Activated CD4-positive, alpha-beta T cell treated with anti-CD3 and anti-CD28 coated beads for 36 hours (primary cell): ENCODE measurements at regions of chr10 and their contacts with region 1.

Region 1: DNA sequence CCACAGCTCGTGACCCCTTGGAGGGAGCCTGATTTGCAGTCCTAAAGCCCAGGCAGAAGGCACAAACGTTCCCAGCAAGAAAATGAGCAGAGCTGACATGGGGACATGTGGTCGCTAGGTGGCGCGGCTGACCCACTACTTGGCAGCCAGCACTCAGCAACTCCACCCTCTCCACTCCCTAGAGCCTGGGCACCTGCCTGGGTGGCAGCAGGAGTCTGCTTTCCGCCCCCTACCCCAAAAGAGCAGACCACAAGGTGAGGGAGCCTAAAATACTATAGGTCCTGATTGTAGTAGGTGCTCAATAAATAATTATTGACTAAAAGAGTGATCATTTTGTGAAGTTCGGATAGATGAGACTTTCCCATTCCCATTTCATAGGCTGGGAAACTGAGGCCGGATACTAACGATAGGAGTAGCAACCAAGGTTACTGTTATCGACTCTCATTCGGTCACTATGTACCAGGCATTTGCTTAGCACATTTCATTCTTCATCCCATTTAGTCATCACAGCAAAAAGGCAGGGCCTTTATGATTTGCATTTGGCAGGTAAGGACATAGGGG is 57.4 kb downstream of the NEUROG3 start:
- DNase-seq: peak; percentile 90
- ATAC-seq: peak; percentile 96
- H3K4me3 Mint-ChIP-seq: no peak overlapping the region
- H3K27ac Mint-ChIP-seq: no peak overlapping the region
- H3K4me1 Mint-ChIP-seq: no peaks in the 10 kb centered on the region
- H3K27me3 Mint-ChIP-seq: peaks cover 6% of the 10 kb centered on the region

Region 2: DNA sequence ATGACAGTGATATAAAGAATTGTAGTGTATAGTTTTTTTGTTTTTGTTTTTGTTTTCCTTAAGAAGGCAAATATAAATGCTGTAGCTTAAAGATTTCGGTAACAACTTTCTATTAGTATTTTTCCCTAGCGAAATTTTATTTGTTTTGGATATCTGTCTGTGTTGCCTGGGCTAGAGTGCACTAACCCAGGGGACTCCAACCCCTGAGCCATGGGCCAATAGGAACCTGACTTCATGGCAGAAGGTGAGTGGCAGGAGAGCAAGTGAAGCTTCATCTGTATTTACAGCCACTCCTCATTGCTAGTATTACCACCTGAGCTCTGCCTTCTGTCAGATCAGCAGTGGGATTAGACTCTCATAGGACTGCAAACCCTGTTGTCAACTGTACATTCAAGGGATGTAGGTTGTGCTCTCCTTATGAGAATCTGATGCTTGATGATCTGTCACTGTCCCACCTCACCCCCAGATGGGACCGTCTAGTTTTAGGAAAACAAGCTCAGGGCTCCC is 860.1 kb before region 1 on chr10:
- CTCF ChIA-PET with region 1: no interaction called
- POLR2A ChIA-PET with region 1: no interaction called
- intact Hi-C with region 1: no loop called
- DNase-seq: no peak
- ATAC-seq: no peak
- H3K4me3 Mint-ChIP-seq: no peak overlapping the region
- H3K27ac Mint-ChIP-seq: no peak overlapping the region
- H3K4me1 Mint-ChIP-seq: no peaks in the 10 kb centered on the region
- H3K27me3 Mint-ChIP-seq: no peaks in the 10 kb centered on the region

Region 3: DNA sequence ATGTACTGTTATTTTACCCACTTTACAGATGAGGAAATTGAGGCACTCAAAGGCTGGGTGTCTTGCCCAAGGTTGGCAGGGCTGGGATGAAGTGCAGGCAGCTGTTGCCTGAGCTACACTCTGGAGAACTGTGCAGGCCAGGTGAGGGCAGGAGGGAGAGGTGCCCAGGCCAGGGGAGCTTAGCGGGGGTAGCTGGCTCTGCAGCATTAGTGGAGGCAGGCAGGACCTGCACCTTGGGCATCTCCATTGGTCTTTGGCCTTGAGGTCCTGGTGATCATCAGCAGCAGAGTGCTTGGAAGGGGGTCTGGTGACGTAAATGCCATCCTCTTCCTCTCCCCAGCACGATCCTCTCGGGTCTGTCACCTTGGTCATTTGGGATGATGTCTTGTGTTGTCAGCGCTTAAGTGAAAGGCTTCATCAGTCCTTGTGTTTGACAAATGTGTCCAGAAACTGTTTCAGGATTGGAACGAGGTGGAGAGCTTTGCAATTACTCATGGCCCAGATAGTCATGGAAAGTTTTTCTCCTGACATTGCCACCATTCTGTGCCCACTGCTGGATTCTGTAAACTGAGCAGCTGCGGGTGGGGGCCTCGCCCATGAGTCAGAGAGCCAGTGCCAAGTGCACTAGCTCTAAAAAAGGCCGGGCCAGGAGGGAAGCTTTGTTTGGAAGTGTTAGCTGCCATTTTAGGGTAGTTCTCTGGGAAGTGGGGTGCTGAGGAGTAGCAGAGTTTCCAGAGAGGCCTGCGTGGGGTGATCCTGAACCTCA is 16.9 kb before region 1 on chr10:
- CTCF ChIA-PET with region 1: interaction called, 11 read pairs
- POLR2A ChIA-PET with region 1: no interaction called
- intact Hi-C with region 1: no loop called
- DNase-seq: no peak
- ATAC-seq: no peak
- H3K4me3 Mint-ChIP-seq: no peak overlapping the region
- H3K27ac Mint-ChIP-seq: no peak overlapping the region
- H3K4me1 Mint-ChIP-seq: peaks cover 7% of the 10 kb centered on the region
- H3K27me3 Mint-ChIP-seq: no peaks in the 10 kb centered on the region

Region 4: GRCh38 chr10:69612760-69613159 is 97.0 kb after region 1 on chr10:
- CTCF ChIA-PET with region 1: interaction called, 15 read pairs
- POLR2A ChIA-PET with region 1: no interaction called
- intact Hi-C with region 1: no loop called
- DNase-seq: no peak
- ATAC-seq: no peak
- H3K4me3 Mint-ChIP-seq: no peak overlapping the region
- H3K27ac Mint-ChIP-seq: no peak overlapping the region
- H3K4me1 Mint-ChIP-seq: no peaks in the 10 kb centered on the region
- H3K27me3 Mint-ChIP-seq: no peaks in the 10 kb centered on the region

Region 5: GRCh38 chr10:69639291-69640195 is 123.8 kb after region 1 on chr10:
- CTCF ChIA-PET with region 1: interaction called, 125 read pairs
- POLR2A ChIA-PET with region 1: no interaction called
- intact Hi-C with region 1: loop called (anchors 1 kb)
- DNase-seq: peak; percentile 81
- ATAC-seq: peak; percentile 76
- H3K4me3 Mint-ChIP-seq: no peak overlapping the region
- H3K27ac Mint-ChIP-seq: no peak overlapping the region
- H3K4me1 Mint-ChIP-seq: no peaks in the 10 kb centered on the region
- H3K27me3 Mint-ChIP-seq: no peaks in the 10 kb centered on the region

Region 6: GRCh38 chr10:69800109-69800508 is 284.3 kb after region 1 on chr10:
- CTCF ChIA-PET with region 1: no interaction called
- POLR2A ChIA-PET with region 1: no interaction called
- intact Hi-C with region 1: loop called in 1 of 2 experiments (anchors 2 kb)
- DNase-seq: peak; percentile 32
- ATAC-seq: no peak
- H3K4me3 Mint-ChIP-seq: no peak overlapping the region
- H3K27ac Mint-ChIP-seq: no peak overlapping the region
- H3K4me1 Mint-ChIP-seq: peaks cover 8% of the 10 kb centered on the region
- H3K27me3 Mint-ChIP-seq: peaks cover 43% of the 10 kb centered on the region

Region 7: DNA sequence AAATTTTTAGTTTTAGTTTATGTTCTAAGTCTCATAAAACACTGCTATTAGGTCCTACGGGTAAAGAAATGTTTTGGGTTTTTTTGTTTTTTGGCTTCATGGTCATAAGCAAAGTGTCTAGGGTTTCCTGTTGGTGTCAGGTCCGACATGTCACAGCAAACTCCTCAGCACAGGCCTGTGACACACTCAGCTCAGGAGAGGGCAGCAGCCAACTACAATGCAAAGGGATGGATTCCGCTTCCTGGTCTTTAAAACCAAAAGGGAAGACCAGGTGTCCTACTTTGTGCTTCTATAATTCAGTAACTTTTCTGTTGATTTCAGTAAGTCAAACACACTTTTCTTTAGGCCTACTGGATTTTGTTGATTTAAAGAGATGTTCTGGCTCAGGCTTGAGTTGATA is 453.1 kb after region 1 on chr10:
- CTCF ChIA-PET with region 1: no interaction called
- POLR2A ChIA-PET with region 1: no interaction called
- intact Hi-C with region 1: no loop called
- DNase-seq: no peak
- ATAC-seq: no peak
- H3K4me3 Mint-ChIP-seq: no peak overlapping the region
- H3K27ac Mint-ChIP-seq: no peak overlapping the region
- H3K4me1 Mint-ChIP-seq: no peaks in the 10 kb centered on the region
- H3K27me3 Mint-ChIP-seq: peaks cover 13% of the 10 kb centered on the region